ENCODE measurements at regions of chr19 and their contacts with region 1.

Region 1: GRCh38 chr19:36772311-36773222 is at the start of gene ZNF850:
- DNase-seq: peak; percentile 95
- H3K4me3 Mint-ChIP-seq: peak within 1 kb of the TSS; percentile 91
- H3K27ac Mint-ChIP-seq: peak within 1 kb of the TSS; percentile 76
- H3K4me1 Mint-ChIP-seq: peaks cover 20% of the 10 kb centered on the region
- H3K27me3 Mint-ChIP-seq: no peaks in the 10 kb centered on the region
- CTCF ChIP-seq: no peak
- total RNA-seq, gene ZNF850: 9.0 and 10.9 TPM in 2 replicates

Region 2: GRCh38 chr19:36819130-36819630 is 46.6 kb after region 1 on chr19:
- CTCF ChIA-PET with region 1: no interaction called
- intact Hi-C with region 1: no loop called
- DNase-seq: no peak
- H3K4me3 Mint-ChIP-seq: no peak overlapping the region
- H3K27ac Mint-ChIP-seq: no peak overlapping the region
- H3K4me1 Mint-ChIP-seq: no peaks in the 10 kb centered on the region
- H3K27me3 Mint-ChIP-seq: no peaks in the 10 kb centered on the region
- CTCF ChIP-seq: no peak

Region 3: DNA sequence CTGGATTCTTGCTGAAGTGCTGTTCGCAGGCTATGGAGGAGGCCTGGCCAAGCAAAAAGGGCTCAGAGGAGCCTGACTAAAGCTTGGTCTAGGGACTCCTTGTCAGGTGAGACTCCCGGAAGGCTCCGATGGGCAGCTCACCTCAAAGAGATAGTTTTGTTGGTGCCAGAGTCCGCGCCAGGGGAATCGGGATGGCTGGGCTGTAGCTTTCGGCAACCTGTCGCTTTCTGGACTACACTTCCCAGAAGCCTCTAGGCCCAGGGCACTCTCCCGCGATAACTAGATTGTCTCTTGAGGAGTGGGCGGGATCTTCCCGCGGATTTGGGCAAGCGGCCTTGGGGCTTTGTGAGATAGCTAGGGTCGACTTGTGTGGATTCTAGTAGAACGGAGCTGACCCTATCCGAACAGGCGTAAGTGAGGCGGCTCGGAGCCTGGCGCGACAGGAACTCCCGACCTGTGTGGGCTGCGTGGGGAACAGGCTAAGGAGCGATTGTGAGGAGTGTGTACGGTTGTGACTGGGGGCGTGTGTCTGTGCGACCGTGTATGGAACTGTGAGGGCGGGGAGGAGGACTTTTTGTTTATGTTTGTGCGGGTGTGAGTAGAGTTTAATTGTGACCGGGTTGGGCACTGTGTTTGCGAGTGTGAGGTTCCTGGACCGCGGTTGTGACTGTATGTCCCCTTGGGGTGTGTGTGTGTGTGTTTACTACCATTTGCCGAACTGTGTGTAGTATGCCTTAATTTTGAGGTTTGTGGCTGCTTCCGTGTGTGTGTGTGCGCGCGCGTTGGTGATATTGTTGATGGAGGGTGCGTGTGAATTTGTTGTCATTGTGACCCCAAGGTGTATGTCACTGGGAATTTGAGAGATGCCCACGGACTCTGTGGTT is 78.2 kb after region 1 on chr19 and contains the start of gene ZNF345:
- CTCF ChIA-PET with region 1: no interaction called
- intact Hi-C with region 1: loop called (anchors 5 kb)
- DNase-seq: peak; percentile 86
- H3K4me3 Mint-ChIP-seq: no peak within 1 kb of the TSS
- H3K27ac Mint-ChIP-seq: no peak within 1 kb of the TSS
- H3K4me1 Mint-ChIP-seq: no peaks in the 10 kb centered on the region
- H3K27me3 Mint-ChIP-seq: no peaks in the 10 kb centered on the region
- CTCF ChIP-seq: no peak
- total RNA-seq, gene ZNF345: 5.0 and 5.3 TPM in 2 replicates

Measured in Calu3 (cell line).